CD8-positive, alpha-beta memory T cell (primary cell): ENCODE measurements at regions of chr14 and their contacts with region 1.

Region 1: GRCh38 chr14:24241829-24242443 is 487 bp downstream of the TINF2 start:
- DNase-seq: peak; percentile 92 to 97 (median 95)
- H3K4me3 ChIP-seq: peak overlapping the region; percentile 79
- H3K4me3 Mint-ChIP-seq: peak overlapping the region; percentile 93 to 99 (median 98)
- H3K27ac ChIP-seq: peak overlapping the region; percentile 99
- H3K27ac Mint-ChIP-seq: peak overlapping the region; percentile 98 to 100 (median 100)
- H3K4me1 ChIP-seq: peaks cover 51% of the 10 kb centered on the region
- H3K4me1 Mint-ChIP-seq: peaks cover 63 to 76% (median 76%) of the 10 kb centered on the region in 3 donors
- H3K27me3 ChIP-seq: no peaks in the 10 kb centered on the region
- H3K27me3 Mint-ChIP-seq: peaks cover 0 to 2% of the 10 kb centered on the region in 2 donors

Region 2: GRCh38 chr14:24102357-24103048 is 139.4 kb before region 1 on chr14:
- CTCF ChIA-PET with region 1: no interaction called
- POLR2A ChIA-PET with region 1: no interaction called
- DNase-seq: no peak
- H3K4me3 ChIP-seq: no peak overlapping the region
- H3K4me3 Mint-ChIP-seq: no peak overlapping the region
- H3K27ac ChIP-seq: no peak overlapping the region
- H3K27ac Mint-ChIP-seq: no peak overlapping the region
- H3K4me1 ChIP-seq: no peaks in the 10 kb centered on the region
- H3K4me1 Mint-ChIP-seq: no peaks in the 10 kb centered on the region
- H3K27me3 ChIP-seq: no peaks in the 10 kb centered on the region
- H3K27me3 Mint-ChIP-seq: no peaks in the 10 kb centered on the region

Region 3: GRCh38 chr14:24188251-24189058 is 53.5 kb before region 1 on chr14 and contains the start of gene IPO4:
- CTCF ChIA-PET with region 1: interaction called, 10 read pairs
- POLR2A ChIA-PET with region 1: interaction called, 14 read pairs
- DNase-seq: peak; percentile 91 to 97 (median 94)
- H3K4me3 ChIP-seq: peak within 1 kb of the TSS; percentile 85
- H3K4me3 Mint-ChIP-seq: peak within 1 kb of the TSS; percentile 90 to 95 (median 92)
- H3K27ac ChIP-seq: peak within 1 kb of the TSS; percentile 74
- H3K27ac Mint-ChIP-seq: peak within 1 kb of the TSS; percentile 80 to 99 (median 96)
- H3K4me1 ChIP-seq: peaks cover 31% of the 10 kb centered on the region
- H3K4me1 Mint-ChIP-seq: peaks cover 25 to 56% (median 43%) of the 10 kb centered on the region in 3 donors
- H3K27me3 ChIP-seq: no peaks in the 10 kb centered on the region
- H3K27me3 Mint-ChIP-seq: no peaks in the 10 kb centered on the region
- total RNA-seq, gene IPO4: 164 to 172 TPM

Region 4: DNA sequence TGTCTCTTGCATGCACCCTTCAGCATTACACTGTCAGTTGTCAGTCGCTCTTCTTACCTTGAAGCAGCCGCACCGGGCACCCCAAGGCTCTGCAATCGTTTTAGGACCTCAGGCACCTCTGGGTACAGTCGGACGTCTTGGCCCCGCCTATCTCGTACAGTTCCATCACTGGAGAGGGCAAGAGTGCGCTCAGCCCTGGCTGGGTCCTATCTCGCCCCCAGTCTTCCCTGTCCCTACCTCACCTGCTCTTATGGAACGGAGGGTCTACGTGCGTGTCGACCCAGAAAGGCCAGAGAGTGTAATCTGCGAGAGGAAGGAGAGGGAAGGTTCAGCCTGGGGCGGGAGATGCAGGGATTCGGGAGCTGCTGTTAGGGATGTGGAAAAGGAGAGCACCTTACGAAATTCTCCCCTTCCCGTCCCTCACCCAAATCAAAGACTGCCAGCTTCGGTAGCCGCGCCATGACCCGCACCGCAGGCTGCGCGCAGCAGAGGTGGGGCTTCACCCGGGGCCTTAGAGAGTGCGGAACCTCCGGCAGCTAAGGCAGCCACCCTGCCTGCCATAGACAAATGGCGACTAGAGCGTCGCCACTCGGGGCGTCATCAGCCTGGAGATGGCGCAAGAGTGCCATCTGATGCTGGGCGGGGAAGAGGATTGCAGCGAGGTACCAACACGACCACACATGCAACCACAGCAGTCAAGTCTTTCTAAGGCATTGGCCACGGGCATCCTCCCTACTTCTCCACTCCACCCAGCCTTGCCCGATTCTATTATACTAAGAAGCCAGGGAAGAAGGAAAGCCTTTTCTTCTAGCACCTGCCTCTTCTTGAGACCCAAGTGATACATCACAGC is 26.2 kb before region 1 on chr14 and contains the start of gene MDP1:
- CTCF ChIA-PET with region 1: interaction called, 54 read pairs
- POLR2A ChIA-PET with region 1: interaction called, 33 read pairs
- DNase-seq: peak; percentile 76 to 92 (median 85)
- H3K4me3 ChIP-seq: peak within 1 kb of the TSS; percentile 94
- H3K4me3 Mint-ChIP-seq: peak within 1 kb of the TSS; percentile 87 to 97 (median 95)
- H3K27ac ChIP-seq: peak within 1 kb of the TSS; percentile 97
- H3K27ac Mint-ChIP-seq: peak within 1 kb of the TSS; percentile 95 to 100 (median 98)
- H3K4me1 ChIP-seq: peaks cover 39% of the 10 kb centered on the region
- H3K4me1 Mint-ChIP-seq: peaks cover 38 to 54% (median 50%) of the 10 kb centered on the region in 3 donors
- H3K27me3 ChIP-seq: no peaks in the 10 kb centered on the region
- H3K27me3 Mint-ChIP-seq: no peaks in the 10 kb centered on the region
- total RNA-seq, gene MDP1: 15.5 to 16.2 TPM

Region 5: GRCh38 chr14:24271134-24271833 is 29.3 kb after region 1 on chr14 and contains the start of gene RABGGTA:
- CTCF ChIA-PET with region 1: interaction called, 94 read pairs
- POLR2A ChIA-PET with region 1: interaction called, 28 read pairs
- DNase-seq: peak; percentile 87 to 98 (median 96)
- H3K4me3 ChIP-seq: peak within 1 kb of the TSS; percentile 63
- H3K4me3 Mint-ChIP-seq: peak within 1 kb of the TSS; percentile 88 to 93 (median 92)
- H3K27ac ChIP-seq: peak within 1 kb of the TSS; percentile 86
- H3K27ac Mint-ChIP-seq: peak within 1 kb of the TSS; percentile 96 to 99 (median 98)
- H3K4me1 ChIP-seq: peaks cover 30% of the 10 kb centered on the region
- H3K4me1 Mint-ChIP-seq: peaks cover 37 to 44% (median 41%) of the 10 kb centered on the region in 3 donors
- H3K27me3 ChIP-seq: no peaks in the 10 kb centered on the region
- H3K27me3 Mint-ChIP-seq: peaks cover 0 to 5% of the 10 kb centered on the region in 2 donors
- total RNA-seq, gene RABGGTA: 41.0 to 41.8 TPM

Region 6: GRCh38 chr14:24299255-24300195 is 57.6 kb after region 1 on chr14 and contains the starts of genes DHRS1 and NOP9:
- CTCF ChIA-PET with region 1: interaction called, 151 read pairs
- POLR2A ChIA-PET with region 1: interaction called, 30 read pairs
- DNase-seq: peak; percentile 87 to 93 (median 89)
- H3K4me3 ChIP-seq: peak within 1 kb of the TSS; percentile 83
- H3K4me3 Mint-ChIP-seq: peak within 1 kb of the TSS; percentile 89 to 97 (median 92)
- H3K27ac ChIP-seq: peak within 1 kb of the TSS; percentile 79
- H3K27ac Mint-ChIP-seq: peak within 1 kb of the TSS; percentile 94 to 99 (median 96)
- H3K4me1 ChIP-seq: peaks cover 47% of the 10 kb centered on the region
- H3K4me1 Mint-ChIP-seq: peaks cover 41 to 59% (median 54%) of the 10 kb centered on the region in 3 donors
- H3K27me3 ChIP-seq: no peaks in the 10 kb centered on the region
- H3K27me3 Mint-ChIP-seq: no peaks in the 10 kb centered on the region
- total RNA-seq, gene DHRS1: 9.3 to 9.8 TPM
- total RNA-seq, gene NOP9: 44.1 to 47.1 TPM

Region 7: GRCh38 chr14:24332268-24332993 is 90.5 kb after region 1 on chr14:
- CTCF ChIA-PET with region 1: interaction called, 52 read pairs
- POLR2A ChIA-PET with region 1: interaction called, 20 read pairs
- DNase-seq: peak; percentile 70 to 92 (median 85)
- H3K4me3 ChIP-seq: peak overlapping the region; percentile 44
- H3K4me3 Mint-ChIP-seq: peak overlapping the region; percentile 63 to 86 (median 79)
- H3K27ac ChIP-seq: no peak overlapping the region
- H3K27ac Mint-ChIP-seq: peak overlapping the region; percentile 15 to 90 (median 80)
- H3K4me1 ChIP-seq: peaks cover 69% of the 10 kb centered on the region
- H3K4me1 Mint-ChIP-seq: peaks cover 69 to 89% (median 83%) of the 10 kb centered on the region in 3 donors
- H3K27me3 ChIP-seq: peaks cover 17% of the 10 kb centered on the region
- H3K27me3 Mint-ChIP-seq: peaks cover 21 to 27% of the 10 kb centered on the region in 2 donors